HepG2 (cell line): ENCODE measurements at regions of chr4 and their contacts with region 1.

Region 1: GRCh38 chr4:94621491-94622080 is 136.2 kb upstream of the BMPR1B start:
- DNase-seq: peak; percentile 28
- ATAC-seq: peak; percentile 63
- H3K4me3 ChIP-seq: no peak overlapping the region
- H3K27ac ChIP-seq: no peak overlapping the region
- H3K4me1 ChIP-seq: no peaks in the 10 kb centered on the region
- H3K27me3 ChIP-seq: no peaks in the 10 kb centered on the region
- CTCF ChIP-seq: peak; percentile 64
- EP300 ChIP-seq: no peak
- POLR2A ChIP-seq: no peak
- RAD21 ChIP-seq: no peak

Region 2: GRCh38 chr4:94635177-94635576 is 13.6 kb after region 1 on chr4:
- CTCF ChIA-PET with region 1: no interaction called
- POLR2A ChIA-PET with region 1: no interaction called
- in situ Hi-C with region 1: no loop called
- intact Hi-C with region 1: no loop called
- DNase-seq: no peak
- ATAC-seq: no peak
- H3K4me3 ChIP-seq: no peak overlapping the region
- H3K27ac ChIP-seq: no peak overlapping the region
- H3K4me1 ChIP-seq: no peaks in the 10 kb centered on the region
- H3K27me3 ChIP-seq: no peaks in the 10 kb centered on the region
- CTCF ChIP-seq: no peak
- EP300 ChIP-seq: no peak
- POLR2A ChIP-seq: no peak
- RAD21 ChIP-seq: no peak

Region 3: DNA sequence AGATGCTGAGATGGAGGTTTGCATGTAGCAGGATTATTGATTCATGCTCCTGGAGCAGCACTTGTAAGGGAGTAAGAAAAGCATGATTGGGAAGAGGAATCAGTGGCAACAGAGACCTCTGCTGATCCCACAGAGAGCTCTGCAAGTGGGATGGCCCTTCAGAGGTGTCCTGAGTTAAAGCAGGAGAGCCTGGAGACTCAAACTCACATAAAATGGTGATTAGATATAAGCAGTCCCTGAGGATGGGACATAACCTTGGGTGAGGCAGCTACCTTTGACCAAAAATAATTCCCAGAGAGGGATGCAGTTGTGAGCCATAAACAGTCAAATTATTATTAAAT is 110.7 kb after region 1 on chr4:
- CTCF ChIA-PET with region 1: no interaction called
- POLR2A ChIA-PET with region 1: no interaction called
- in situ Hi-C with region 1: no loop called
- intact Hi-C with region 1: loop called (anchors 5 kb)
- DNase-seq: no peak
- ATAC-seq: no peak
- H3K4me3 ChIP-seq: no peak overlapping the region
- H3K27ac ChIP-seq: no peak overlapping the region
- H3K4me1 ChIP-seq: no peaks in the 10 kb centered on the region
- H3K27me3 ChIP-seq: no peaks in the 10 kb centered on the region
- CTCF ChIP-seq: no peak
- EP300 ChIP-seq: no peak
- POLR2A ChIP-seq: no peak
- RAD21 ChIP-seq: no peak

Region 4: GRCh38 chr4:94757192-94758139 is 135.9 kb after region 1 on chr4 and contains the start of gene BMPR1B:
- CTCF ChIA-PET with region 1: no interaction called
- POLR2A ChIA-PET with region 1: no interaction called
- in situ Hi-C with region 1: no loop called
- intact Hi-C with region 1: loop called (anchors 5 kb)
- DNase-seq: no peak
- ATAC-seq: peak; percentile 71
- H3K4me3 ChIP-seq: peak within 1 kb of the TSS in 2 of 3 experiments; percentile 6 to 43; a peak in 3 of 6 replicates
- H3K27ac ChIP-seq: no peak within 1 kb of the TSS
- H3K4me1 ChIP-seq: no peaks in the 10 kb centered on the region
- H3K27me3 ChIP-seq: peaks cover 6 to 50% of the 10 kb centered on the region in 2 experiments
- CTCF ChIP-seq: no peak
- EP300 ChIP-seq: no peak
- POLR2A ChIP-seq: no peak
- RAD21 ChIP-seq: no peak
- total RNA-seq, gene BMPR1B: 0.07 TPM in 1 of 2 replicates, not detected in the other

Region 5: DNA sequence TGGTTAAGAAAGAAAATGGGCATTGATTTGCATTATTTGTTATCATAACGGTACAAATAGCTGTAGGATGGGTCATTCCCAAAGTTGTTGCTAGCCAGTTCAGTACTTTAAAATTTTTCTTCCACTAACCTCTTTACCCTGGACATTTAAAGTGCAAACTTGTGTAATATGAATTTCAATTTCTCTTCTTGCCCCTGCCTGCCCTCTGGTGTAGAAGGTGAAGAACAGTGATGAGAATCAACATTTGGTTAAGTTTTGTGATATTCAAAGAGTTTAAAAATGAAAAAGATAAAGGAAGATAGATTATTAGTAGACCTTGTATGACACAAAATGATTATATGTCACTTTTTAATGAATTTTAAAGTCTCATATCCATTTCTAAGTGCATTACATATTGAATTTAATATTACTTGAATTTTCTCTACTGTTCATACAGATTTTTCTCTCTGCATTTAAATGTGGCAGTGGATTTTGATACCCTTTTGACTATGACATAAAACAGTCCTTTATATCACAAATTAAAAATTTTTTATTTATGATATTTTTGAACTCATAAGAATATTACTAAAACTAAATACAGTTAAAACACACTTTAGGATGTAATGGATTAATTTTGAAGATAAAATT is 473.9 kb after region 1 on chr4:
- CTCF ChIA-PET with region 1: interaction called, 5 read pairs
- POLR2A ChIA-PET with region 1: no interaction called
- in situ Hi-C with region 1: no loop called
- intact Hi-C with region 1: loop called (anchors 1 kb)
- DNase-seq: peak; percentile 5
- ATAC-seq: peak; percentile 43; the same call in 1 of the 3 replicates
- H3K4me3 ChIP-seq: no peak overlapping the region
- H3K27ac ChIP-seq: no peak overlapping the region
- H3K4me1 ChIP-seq: no peaks in the 10 kb centered on the region
- H3K27me3 ChIP-seq: no peaks in the 10 kb centered on the region
- CTCF ChIP-seq: peak; percentile 49
- EP300 ChIP-seq: no peak
- POLR2A ChIP-seq: no peak
- RAD21 ChIP-seq: no peak

Region 6: GRCh38 chr4:95124906-95125504 is 503.4 kb after region 1 on chr4:
- CTCF ChIA-PET with region 1: interaction called, 9 read pairs
- POLR2A ChIA-PET with region 1: no interaction called
- in situ Hi-C with region 1: loop called (anchors 10 kb)
- intact Hi-C with region 1: loop called (anchors 1 kb)
- DNase-seq: peak; percentile 8
- ATAC-seq: peak; percentile 60
- H3K4me3 ChIP-seq: no peak overlapping the region
- H3K27ac ChIP-seq: no peak overlapping the region
- H3K4me1 ChIP-seq: no peaks in the 10 kb centered on the region
- H3K27me3 ChIP-seq: no peaks in the 10 kb centered on the region
- CTCF ChIP-seq: peak; percentile 40
- EP300 ChIP-seq: no peak
- POLR2A ChIP-seq: no peak
- RAD21 ChIP-seq: no peak